HCT116 (cell line): ENCODE measurements at regions of chr6 and their contacts with region 1.

Region 1: DNA sequence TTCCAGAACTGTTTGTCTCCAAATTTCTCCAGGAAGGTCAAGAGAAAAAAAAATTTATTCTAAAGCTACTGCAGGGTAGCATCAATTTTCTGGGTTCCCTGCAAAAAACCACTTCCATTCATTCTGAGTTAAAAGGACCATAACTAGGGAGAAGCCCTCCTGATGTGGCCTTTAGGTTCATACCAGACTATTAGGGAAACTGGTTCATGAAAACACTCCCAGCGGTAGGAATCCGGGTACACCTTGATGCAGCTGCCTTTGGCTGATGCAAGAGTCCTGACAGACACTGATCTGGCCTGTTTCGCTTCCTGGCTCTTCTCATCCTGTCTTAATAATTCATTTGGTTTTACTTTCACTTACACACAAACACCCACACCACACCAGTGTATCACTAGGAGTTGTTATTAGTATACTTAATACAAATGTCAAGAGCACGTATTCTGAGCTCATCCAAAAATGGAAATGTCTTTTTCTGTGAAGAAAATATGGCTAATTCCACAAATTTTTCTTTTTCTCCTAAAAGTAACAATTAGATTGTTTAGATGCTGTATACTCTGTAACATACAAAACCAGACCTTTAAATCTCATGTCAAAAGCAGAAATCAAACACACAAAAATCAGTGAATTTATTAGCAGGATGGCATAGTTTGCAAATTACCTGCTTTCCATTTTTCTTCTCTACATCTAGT is 38.4 kb upstream of the ARHGAP18 start:
- DNase-seq: peak; percentile 90
- ATAC-seq: peak; percentile 47
- H3K4me3 ChIP-seq: peak overlapping the region in 1 of 2 experiments; percentile 38; a peak in 2 of 4 replicates
- H3K27ac ChIP-seq: peak overlapping the region; percentile 100
- H3K4me1 ChIP-seq: peaks cover 86 to 94% of the 10 kb centered on the region in 2 experiments
- H3K27me3 ChIP-seq: no peaks in the 10 kb centered on the region
- CTCF ChIP-seq: peak in 2 of 3 experiments; percentile 48 to 61; a peak in 4 of 6 replicates
- POLR2A ChIP-seq: no peak
- RAD21 ChIP-seq: no peak; the same call in 1 of the 2 replicates

Region 2: DNA sequence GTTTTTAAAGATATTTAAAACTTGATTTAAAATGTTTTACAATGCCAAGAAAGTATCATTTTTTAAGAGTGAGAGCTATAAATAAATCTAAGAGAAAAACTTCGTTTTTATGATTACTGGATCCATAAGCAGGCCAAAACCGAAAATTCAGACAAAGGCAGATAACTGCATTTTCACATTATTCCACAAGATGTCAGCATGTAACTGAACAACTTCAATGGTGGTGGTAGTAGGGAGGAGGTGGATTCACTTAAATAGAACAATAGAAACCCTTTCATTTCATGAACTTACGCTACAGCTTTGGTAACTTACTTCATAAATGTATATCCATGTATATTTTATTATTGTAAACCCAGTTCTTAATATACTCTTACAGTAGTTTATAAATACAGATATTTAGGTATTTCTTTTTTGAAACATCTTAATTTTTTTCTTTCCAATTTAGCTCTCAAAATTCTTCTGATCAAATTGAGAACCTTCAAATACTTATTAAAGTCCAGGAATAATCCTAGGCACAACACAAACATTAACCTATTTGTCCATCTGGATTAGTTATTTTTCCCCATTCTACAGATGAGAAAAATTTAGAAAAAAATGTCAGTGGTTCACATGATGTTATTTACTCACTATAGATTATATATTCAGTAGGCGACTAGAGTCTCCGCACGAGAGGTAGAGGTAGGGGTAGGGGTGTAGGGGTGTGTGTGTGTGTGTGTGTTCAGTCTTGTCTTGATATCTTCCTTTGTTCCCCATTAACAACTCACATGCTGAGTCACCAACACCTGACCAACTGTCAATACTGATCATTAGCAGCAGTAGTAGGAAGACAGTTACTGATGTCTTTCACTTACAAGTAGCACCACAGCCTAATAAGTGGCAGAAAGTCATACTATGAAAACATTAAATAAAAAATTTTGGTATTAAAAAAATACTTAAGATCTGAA is 149.8 kb before region 1 on chr6:
- CTCF ChIA-PET with region 1: interaction called, 6 read pairs
- POLR2A ChIA-PET with region 1: no interaction called
- RAD21 ChIA-PET with region 1: no interaction called
- intact Hi-C with region 1: loop called (anchors 1 kb)
- DNase-seq: peak; percentile 72
- ATAC-seq: peak; percentile 83
- H3K4me3 ChIP-seq: no peak overlapping the region
- H3K27ac ChIP-seq: peak overlapping the region; percentile 58; the same call in 1 of the 2 replicates
- H3K4me1 ChIP-seq: peaks cover 25 to 26% of the 10 kb centered on the region in 2 experiments
- H3K27me3 ChIP-seq: no peaks in the 10 kb centered on the region
- CTCF ChIP-seq: peak; percentile 52 to 83 (median 81)
- POLR2A ChIP-seq: no peak
- RAD21 ChIP-seq: peak; percentile 92

Region 3: DNA sequence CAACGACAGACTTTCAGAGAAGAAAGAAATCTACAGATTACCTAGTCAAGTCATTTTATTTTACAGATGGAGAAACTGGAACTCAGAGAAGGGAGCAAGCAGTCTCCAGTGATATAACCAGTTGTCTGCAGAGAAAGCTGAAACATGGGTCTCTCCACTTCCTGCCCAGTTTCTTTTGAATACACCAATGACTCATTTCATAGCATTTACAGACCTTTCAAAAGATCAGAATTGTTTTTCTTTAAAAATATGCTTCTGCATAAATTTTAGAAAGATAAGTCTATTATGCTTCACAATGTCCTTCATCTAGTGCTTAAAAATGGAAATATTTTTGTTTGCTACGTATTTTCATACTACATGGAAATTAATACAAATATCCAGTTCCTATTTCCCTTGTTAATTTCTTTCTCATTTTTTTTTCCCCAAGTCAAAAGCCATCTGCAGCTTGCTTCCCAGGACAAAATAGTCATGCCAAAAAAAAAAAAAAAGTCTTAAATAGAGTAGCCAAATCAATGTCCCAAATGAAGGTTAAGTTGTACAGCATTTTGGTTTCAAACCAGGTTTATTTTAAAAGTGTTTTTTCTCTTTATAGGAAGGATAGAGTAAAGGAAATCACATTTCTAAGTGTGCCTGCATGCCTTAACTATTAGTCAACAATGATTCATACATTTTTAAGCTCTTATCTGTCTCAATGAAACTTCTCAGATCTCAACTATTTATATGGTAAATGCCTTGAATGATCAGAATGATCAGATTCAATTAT is 75.3 kb before region 1 on chr6:
- CTCF ChIA-PET with region 1: interaction called, 3 read pairs
- POLR2A ChIA-PET with region 1: interaction called, 6 read pairs
- RAD21 ChIA-PET with region 1: no interaction called
- intact Hi-C with region 1: loop called (anchors 2 kb)
- DNase-seq: peak; percentile 80
- ATAC-seq: peak; percentile 71
- H3K4me3 ChIP-seq: peak overlapping the region in 1 of 2 experiments; percentile 42; a peak in 2 of 4 replicates
- H3K27ac ChIP-seq: peak overlapping the region; percentile 97
- H3K4me1 ChIP-seq: peaks cover 88 to 90% of the 10 kb centered on the region in 2 experiments
- H3K27me3 ChIP-seq: no peaks in the 10 kb centered on the region
- CTCF ChIP-seq: no peak
- POLR2A ChIP-seq: no peak
- RAD21 ChIP-seq: peak; percentile 11; the same call in 1 of the 2 replicates

Region 4: GRCh38 chr6:129730477-129731165 is 17.7 kb before region 1 on chr6:
- CTCF ChIA-PET with region 1: interaction called, 7 read pairs
- POLR2A ChIA-PET with region 1: interaction called, 7 read pairs
- RAD21 ChIA-PET with region 1: no interaction called
- intact Hi-C with region 1: loop called (anchors 1 kb)
- DNase-seq: no peak
- ATAC-seq: peak; percentile 62
- H3K4me3 ChIP-seq: no peak overlapping the region
- H3K27ac ChIP-seq: peak overlapping the region; percentile 52
- H3K4me1 ChIP-seq: peaks cover 27 to 38% of the 10 kb centered on the region in 2 experiments
- H3K27me3 ChIP-seq: no peaks in the 10 kb centered on the region
- CTCF ChIP-seq: peak; percentile 60 to 85 (median 71)
- POLR2A ChIP-seq: no peak
- RAD21 ChIP-seq: peak; percentile 96

Region 5: GRCh38 chr6:130115036-130115435 is 366.7 kb after region 1 on chr6:
- CTCF ChIA-PET with region 1: no interaction called
- POLR2A ChIA-PET with region 1: no interaction called
- RAD21 ChIA-PET with region 1: no interaction called
- intact Hi-C with region 1: no loop called
- DNase-seq: no peak
- ATAC-seq: no peak
- H3K4me3 ChIP-seq: no peak overlapping the region
- H3K27ac ChIP-seq: no peak overlapping the region
- H3K4me1 ChIP-seq: no peaks in the 10 kb centered on the region
- H3K27me3 ChIP-seq: no peaks in the 10 kb centered on the region
- CTCF ChIP-seq: no peak
- POLR2A ChIP-seq: no peak
- RAD21 ChIP-seq: no peak

Region 6: DNA sequence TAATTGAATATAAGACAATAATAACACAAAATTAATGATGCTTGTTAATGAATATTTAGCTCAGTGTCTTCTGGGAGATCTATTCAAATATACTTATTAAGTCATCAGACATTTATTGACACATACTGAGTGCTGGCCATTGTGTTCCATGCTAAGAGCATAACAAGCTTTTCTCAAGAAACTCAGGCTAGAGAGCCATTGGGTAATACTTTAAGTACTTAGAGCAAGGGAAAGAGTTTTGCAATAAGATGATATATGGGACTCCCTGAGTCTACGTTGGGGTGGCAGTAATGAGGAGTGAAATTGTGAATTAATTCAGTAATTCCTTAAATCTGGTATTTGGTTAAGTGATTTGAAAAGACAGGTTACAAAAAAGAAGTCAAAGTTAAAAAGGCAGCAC is 628.6 kb after region 1 on chr6:
- CTCF ChIA-PET with region 1: no interaction called
- POLR2A ChIA-PET with region 1: no interaction called
- RAD21 ChIA-PET with region 1: no interaction called
- intact Hi-C with region 1: no loop called
- DNase-seq: no peak
- ATAC-seq: no peak
- H3K4me3 ChIP-seq: no peak overlapping the region
- H3K27ac ChIP-seq: no peak overlapping the region
- H3K4me1 ChIP-seq: 0 out of 4 replicates have a peak, but pooled peaks cover 0 to 3% of the 10 kb centered on the region in 2 experiments
- H3K27me3 ChIP-seq: no peaks in the 10 kb centered on the region
- CTCF ChIP-seq: no peak
- POLR2A ChIP-seq: no peak
- RAD21 ChIP-seq: no peak